Activated naive CD4-positive, alpha-beta T cell treated with anti-CD3 and anti-CD28 coated beads for 36 hours (primary cell): ENCODE measurements at regions of chr17 and their contacts with region 1.

Region 1: GRCh38 chr17:7716901-7717755 is at the start of gene DNAH2:
- DNase-seq: peak; percentile 55
- H3K4me3 Mint-ChIP-seq: peak within 1 kb of the TSS; percentile 73
- H3K27ac Mint-ChIP-seq: no peak within 1 kb of the TSS
- H3K4me1 Mint-ChIP-seq: peaks cover 5% of the 10 kb centered on the region
- H3K27me3 Mint-ChIP-seq: peaks cover 61% of the 10 kb centered on the region
- total RNA-seq, gene DNAH2: not detected

Region 2: DNA sequence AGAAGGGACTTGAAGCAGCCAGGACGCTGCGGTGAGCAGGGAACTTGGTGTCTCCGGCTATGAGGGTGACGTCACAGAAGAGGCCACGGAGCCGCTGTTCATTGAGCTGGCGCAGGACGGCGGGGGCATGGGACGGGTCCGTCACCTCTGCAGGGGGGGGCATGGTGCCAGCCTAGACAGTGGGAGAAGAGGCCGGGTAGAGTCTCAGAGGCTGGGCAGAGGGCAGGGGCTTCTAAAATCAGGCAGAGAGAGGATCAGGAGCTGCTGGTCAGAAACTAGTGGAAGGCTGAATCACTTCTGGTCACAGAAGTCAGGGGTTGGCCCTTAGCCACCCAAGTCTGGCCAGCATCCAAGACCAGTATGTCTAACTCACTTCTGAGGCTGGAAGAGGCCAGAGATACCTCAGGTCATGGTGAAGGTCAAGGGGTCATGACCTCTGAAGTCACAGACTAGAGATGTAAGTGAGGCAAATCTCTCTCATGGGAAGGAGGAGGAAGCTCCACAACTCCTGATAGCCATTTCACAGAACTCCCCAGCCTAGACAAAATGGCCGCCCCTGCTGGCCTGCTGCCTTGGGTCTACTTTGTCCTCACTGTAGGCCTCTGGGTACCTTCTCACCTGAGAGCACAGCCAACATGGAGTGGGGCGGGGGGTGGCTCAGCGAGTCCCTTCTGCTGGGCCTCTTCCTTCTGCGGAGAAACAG is 250.3 kb before region 1 on chr17:
- CTCF ChIA-PET with region 1: no interaction called
- intact Hi-C with region 1: no loop called
- DNase-seq: no peak
- H3K4me3 Mint-ChIP-seq: no peak overlapping the region
- H3K27ac Mint-ChIP-seq: peak overlapping the region; percentile 53
- H3K4me1 Mint-ChIP-seq: peaks cover 8% of the 10 kb centered on the region
- H3K27me3 Mint-ChIP-seq: no peaks in the 10 kb centered on the region

Region 3: GRCh38 chr17:7650509-7651096 is 66.5 kb before region 1 on chr17 and contains the start of gene ATP1B2:
- CTCF ChIA-PET with region 1: no interaction called
- intact Hi-C with region 1: loop called (anchors 5 kb)
- DNase-seq: peak; percentile 78
- H3K4me3 Mint-ChIP-seq: peak within 1 kb of the TSS; percentile 62
- H3K27ac Mint-ChIP-seq: no peak within 1 kb of the TSS
- H3K4me1 Mint-ChIP-seq: peaks cover 18% of the 10 kb centered on the region
- H3K27me3 Mint-ChIP-seq: peaks cover 22% of the 10 kb centered on the region
- total RNA-seq, gene ATP1B2: 0.14 to 0.30 TPM

Region 4: GRCh38 chr17:7782237-7782636 is 65.1 kb after region 1 on chr17:
- CTCF ChIA-PET with region 1: no interaction called
- intact Hi-C with region 1: no loop called
- DNase-seq: no peak
- H3K4me3 Mint-ChIP-seq: no peak overlapping the region
- H3K27ac Mint-ChIP-seq: no peak overlapping the region
- H3K4me1 Mint-ChIP-seq: no peaks in the 10 kb centered on the region
- H3K27me3 Mint-ChIP-seq: peaks cover 2% of the 10 kb centered on the region